Mammary epithelial cell (primary cell): ENCODE measurements at regions of chr7 and their contacts with region 1.

Region 1: DNA sequence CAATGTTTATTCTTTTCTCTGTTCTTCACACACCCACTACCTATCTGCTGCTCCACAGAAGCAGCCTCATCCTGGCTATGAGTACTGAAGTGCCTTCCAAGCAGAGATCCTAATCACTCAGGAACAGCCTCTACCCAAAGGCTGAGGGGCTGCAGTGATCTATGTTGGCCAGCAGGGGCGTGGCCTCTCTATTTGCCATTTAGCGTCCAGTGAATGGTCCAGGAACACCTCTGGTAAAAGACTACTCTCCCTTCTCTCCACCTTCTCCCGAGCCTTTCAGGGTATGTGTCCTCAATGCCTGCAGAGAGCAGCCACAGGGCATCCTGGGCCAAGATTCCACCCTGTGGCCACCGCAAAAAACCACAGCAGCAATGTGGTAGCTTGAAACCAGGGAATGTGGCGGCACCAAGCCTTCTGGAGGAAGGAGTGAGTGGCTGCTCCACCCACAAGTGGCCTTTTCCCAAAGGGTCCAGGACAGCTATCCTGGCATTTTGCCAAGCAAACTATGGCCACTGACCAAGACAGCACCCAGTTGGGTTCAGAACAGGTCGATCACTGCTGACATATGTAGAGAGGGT is 70.9 kb downstream of the SYPL1 start:
- DNase-seq: peak; percentile 34
- H3K4me3 ChIP-seq: no peak overlapping the region
- H3K27ac ChIP-seq: no peak overlapping the region
- H3K4me1 ChIP-seq: peaks cover 6% of the 10 kb centered on the region
- H3K27me3 ChIP-seq: no peaks in the 10 kb centered on the region
- CTCF ChIP-seq: peak; percentile 72 to 91

Region 2: GRCh38 chr7:105531792-105532671 is 509.2 kb before region 1 on chr7 and contains the start of gene RINT1:
- CTCF ChIA-PET with region 1: no interaction called
- dilution Hi-C with region 1: no loop called
- in situ Hi-C with region 1: no loop called
- intact Hi-C with region 1: loop called (anchors 10 kb)
- DNase-seq: peak; percentile 85
- H3K4me3 ChIP-seq: peak within 1 kb of the TSS; percentile 83 to 100 (median 92)
- H3K27ac ChIP-seq: peak within 1 kb of the TSS; percentile 66
- H3K4me1 ChIP-seq: peaks cover 12% of the 10 kb centered on the region
- H3K27me3 ChIP-seq: no peaks in the 10 kb centered on the region
- CTCF ChIP-seq: peak; percentile 61 to 82
- total RNA-seq, gene RINT1: 15.8 to 21.4 TPM

Region 3: GRCh38 chr7:105652359-105652993 is 388.8 kb before region 1 on chr7:
- CTCF ChIA-PET with region 1: interaction called, 3 read pairs
- dilution Hi-C with region 1: no loop called
- in situ Hi-C with region 1: no loop called
- intact Hi-C with region 1: loop called (anchors 1 kb)
- DNase-seq: peak; percentile 43
- H3K4me3 ChIP-seq: no peak overlapping the region
- H3K27ac ChIP-seq: no peak overlapping the region
- H3K4me1 ChIP-seq: peaks cover 7% of the 10 kb centered on the region
- H3K27me3 ChIP-seq: no peaks in the 10 kb centered on the region
- CTCF ChIP-seq: peak; percentile 82 to 90

Region 4: GRCh38 chr7:105759670-105760550 is 281.3 kb before region 1 on chr7:
- CTCF ChIA-PET with region 1: interaction called, 7 read pairs
- dilution Hi-C with region 1: no loop called
- in situ Hi-C with region 1: loop called in 1 of 2 experiments (anchors 5 kb)
- intact Hi-C with region 1: loop called (anchors 1 kb)
- DNase-seq: peak; percentile 37
- H3K4me3 ChIP-seq: no peak overlapping the region
- H3K27ac ChIP-seq: no peak overlapping the region
- H3K4me1 ChIP-seq: no peaks in the 10 kb centered on the region
- H3K27me3 ChIP-seq: no peaks in the 10 kb centered on the region
- CTCF ChIP-seq: peak; percentile 60 to 68

Region 5: GRCh38 chr7:105934572-105935185 is 106.5 kb before region 1 on chr7:
- CTCF ChIA-PET with region 1: no interaction called
- dilution Hi-C with region 1: no loop called
- in situ Hi-C with region 1: no loop called
- intact Hi-C with region 1: loop called (anchors 1 kb)
- DNase-seq: peak; percentile 12
- H3K4me3 ChIP-seq: no peak overlapping the region
- H3K27ac ChIP-seq: no peak overlapping the region
- H3K4me1 ChIP-seq: peaks cover 14% of the 10 kb centered on the region
- H3K27me3 ChIP-seq: no peaks in the 10 kb centered on the region
- CTCF ChIP-seq: peak in 1 of 2 donors; percentile 30

Region 6: GRCh38 chr7:105990726-105991453 is 50.3 kb before region 1 on chr7:
- CTCF ChIA-PET with region 1: no interaction called
- dilution Hi-C with region 1: no loop called
- in situ Hi-C with region 1: no loop called
- intact Hi-C with region 1: no loop called
- DNase-seq: no peak
- H3K4me3 ChIP-seq: no peak overlapping the region
- H3K27ac ChIP-seq: no peak overlapping the region
- H3K4me1 ChIP-seq: no peaks in the 10 kb centered on the region
- H3K27me3 ChIP-seq: peaks cover 5% of the 10 kb centered on the region
- CTCF ChIP-seq: no peak

Region 7: DNA sequence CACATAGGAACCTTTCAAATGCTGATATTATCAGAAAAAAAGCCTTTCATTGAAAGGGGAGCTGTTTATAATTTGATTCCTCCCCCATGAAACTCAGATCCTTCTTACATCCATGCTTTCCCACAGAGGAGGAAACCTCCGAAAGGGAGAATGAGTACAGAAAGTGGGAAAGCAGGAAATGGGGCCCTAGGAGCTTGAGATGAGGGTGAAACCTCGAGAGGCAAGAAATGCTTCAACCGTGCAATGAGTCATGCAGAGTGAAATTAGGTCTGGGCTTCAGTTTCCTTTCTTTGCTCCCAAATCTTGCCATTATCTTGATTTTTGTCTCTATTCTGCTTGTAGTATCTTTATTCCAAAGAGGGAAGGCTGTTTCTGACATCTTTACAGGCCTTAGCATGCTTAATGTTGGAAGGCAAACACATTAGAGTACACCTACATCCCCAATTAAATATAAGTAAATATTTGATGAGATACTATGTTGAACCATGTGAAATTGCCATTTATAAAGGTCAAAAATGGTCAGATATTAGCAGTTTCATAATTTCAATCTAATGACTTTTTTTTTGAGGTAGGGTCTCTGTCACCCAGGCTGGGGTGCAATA is 164.5 kb after region 1 on chr7:
- CTCF ChIA-PET with region 1: no interaction called
- dilution Hi-C with region 1: no loop called
- in situ Hi-C with region 1: no loop called
- intact Hi-C with region 1: no loop called
- DNase-seq: peak; percentile 10
- H3K4me3 ChIP-seq: no peak overlapping the region
- H3K27ac ChIP-seq: no peak overlapping the region
- H3K4me1 ChIP-seq: no peaks in the 10 kb centered on the region
- H3K27me3 ChIP-seq: no peaks in the 10 kb centered on the region
- CTCF ChIP-seq: no peak

Region 8: DNA sequence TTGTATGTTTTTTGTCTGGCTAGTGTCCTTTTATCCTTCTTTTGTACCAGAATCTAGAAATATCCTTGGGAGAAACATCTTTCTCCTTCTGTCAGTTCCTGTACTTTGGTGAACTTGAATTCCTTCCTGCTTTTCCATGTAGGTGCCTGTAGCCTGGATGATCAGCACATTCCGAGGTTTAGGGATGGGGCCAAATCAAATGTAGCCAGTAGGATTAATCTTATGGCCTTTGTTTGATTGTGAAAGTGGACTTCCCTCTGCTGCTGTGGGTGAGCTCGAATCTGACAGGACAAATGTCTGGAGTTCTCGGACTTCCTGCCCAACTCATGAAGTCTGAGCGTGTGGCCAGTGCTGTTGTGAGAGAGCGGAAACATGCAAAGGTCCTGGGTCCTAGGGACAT is 276.7 kb after region 1 on chr7:
- CTCF ChIA-PET with region 1: no interaction called
- dilution Hi-C with region 1: no loop called
- in situ Hi-C with region 1: no loop called
- intact Hi-C with region 1: no loop called
- DNase-seq: peak; percentile 49
- H3K4me3 ChIP-seq: no peak overlapping the region
- H3K27ac ChIP-seq: no peak overlapping the region
- H3K4me1 ChIP-seq: peaks cover 22% of the 10 kb centered on the region
- H3K27me3 ChIP-seq: no peaks in the 10 kb centered on the region
- CTCF ChIP-seq: no peak